Head of caudate nucleus (tissue), 42 donors: ENCODE measurements at regions of chr20 and their contacts with region 1.

Region 1: GRCh38 chr20:50189681-50190582 is 698 bp upstream of the CEBPB start:
- DNase-seq: peak in 40 of 42 donors; percentile 57 to 88 (median 76)

Region 2: GRCh38 chr20:50308513-50309279 is 118.8 kb after region 1 on chr20:
- intact Hi-C with region 1: loop called (anchors 10 kb)
- DNase-seq: peak; percentile 26 to 90 (median 68)

Region 3: DNA sequence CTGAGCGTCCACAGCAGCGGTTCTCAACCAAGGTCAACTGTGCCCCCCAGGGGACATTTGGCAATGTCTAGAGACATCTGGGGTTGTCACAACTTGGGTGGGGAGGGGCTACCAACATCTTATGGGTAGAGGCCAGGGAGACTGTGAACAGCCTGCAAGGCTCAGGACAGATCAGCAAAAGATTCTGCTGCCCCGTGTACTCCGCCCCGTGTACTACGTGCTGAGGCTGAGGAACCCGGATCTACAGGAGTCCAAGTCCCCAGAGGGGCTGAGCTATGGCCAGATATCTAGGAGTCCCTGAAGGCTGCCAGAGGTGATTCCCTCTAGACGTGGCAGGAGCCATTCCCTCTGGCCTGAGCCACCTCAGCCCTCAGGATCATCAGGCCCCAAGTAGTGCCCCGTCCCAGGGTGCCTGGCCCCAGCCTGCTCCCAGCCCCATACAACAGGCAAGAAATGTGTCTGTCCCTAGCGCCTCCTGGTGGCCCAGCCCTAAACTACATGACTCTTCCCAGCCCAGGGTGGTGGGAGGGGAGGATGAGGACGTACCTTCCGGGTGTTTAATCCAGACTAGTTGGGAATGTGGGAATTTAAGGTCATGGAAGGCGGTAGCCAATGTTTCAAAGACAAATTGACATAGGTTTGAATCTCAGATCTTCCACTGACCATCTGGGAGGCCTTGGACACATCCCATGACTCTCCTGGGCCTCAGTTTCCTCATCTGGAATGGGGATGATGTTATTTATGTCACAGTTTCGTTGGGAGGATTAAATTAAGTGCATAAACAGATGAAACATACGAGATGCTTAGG is 270.7 kb after region 1 on chr20:
- intact Hi-C with region 1: loop called (anchors 1 kb)
- DNase-seq: peak; percentile 53 to 92 (median 80)